Posterior vena cava (tissue), 2 donors: ENCODE measurements at regions of chrX and their contacts with region 1.

Region 1: DNA sequence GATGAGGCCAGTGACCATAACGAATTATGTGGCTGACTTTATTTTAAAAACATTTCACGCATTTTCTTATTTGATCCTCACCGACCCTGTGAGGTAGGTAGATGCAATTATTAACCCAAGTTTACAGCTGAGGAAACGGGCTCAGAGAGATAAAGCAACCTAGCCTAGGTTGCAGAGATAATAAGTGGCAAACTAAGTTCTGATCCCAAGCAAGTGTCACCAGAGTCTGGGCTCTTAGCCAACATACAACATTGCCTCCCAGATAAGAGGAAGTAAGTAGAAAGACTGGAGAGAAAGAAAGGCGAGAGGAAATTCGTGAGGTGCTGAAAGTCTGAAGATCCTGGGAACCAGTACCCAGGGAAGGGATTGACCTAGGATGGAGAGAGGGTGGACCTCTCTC is 77.4 kb upstream of the GPR50 start:
- DNase-seq: no peak

Region 2: GRCh38 chrX:151151665-151152267 is 52.8 kb after region 1 on chrX:
- intact Hi-C with region 1: loop called in 1 of 2 experiments (anchors 10 kb)
- DNase-seq: no peak